Breast epithelium (tissue), 4 donors: ENCODE measurements at regions of chr7 and their contacts with region 1.

Region 1: DNA sequence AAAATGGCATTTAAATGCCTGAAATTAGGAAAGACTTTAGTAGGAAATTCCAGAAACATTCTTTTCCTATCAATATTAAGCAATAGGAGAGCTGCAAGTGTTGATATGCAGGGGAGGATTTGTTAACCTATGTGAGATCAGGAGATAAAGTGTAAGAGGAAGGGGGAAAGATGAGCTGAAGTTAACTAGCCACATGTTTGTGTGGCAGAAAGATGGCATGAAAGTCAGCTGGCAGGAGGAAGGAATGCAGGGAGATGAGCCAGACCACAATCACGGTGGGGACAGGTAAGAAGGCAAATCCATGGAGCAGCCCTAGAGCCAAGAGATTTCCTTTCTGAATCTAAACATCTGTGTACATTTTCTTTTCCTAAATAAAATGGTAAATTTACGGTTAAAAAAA is 303.6 kb downstream of the MAGI2 start:
- DNase-seq: no peak
- H3K4me3 ChIP-seq: no peak overlapping the region
- H3K27ac ChIP-seq: no peak overlapping the region
- H3K4me1 ChIP-seq: no peaks in the 10 kb centered on the region
- H3K27me3 ChIP-seq: no peaks in the 10 kb centered on the region
- CTCF ChIP-seq: no peak
- POLR2A ChIP-seq: no peak

Region 2: GRCh38 chr7:79090543-79090942 is 59.3 kb before region 1 on chr7:
- intact Hi-C with region 1: no loop called
- DNase-seq: no peak
- H3K4me3 ChIP-seq: no peak overlapping the region
- H3K27ac ChIP-seq: no peak overlapping the region
- H3K4me1 ChIP-seq: no peaks in the 10 kb centered on the region
- H3K27me3 ChIP-seq: no peaks in the 10 kb centered on the region
- CTCF ChIP-seq: no peak
- POLR2A ChIP-seq: no peak

Region 3: DNA sequence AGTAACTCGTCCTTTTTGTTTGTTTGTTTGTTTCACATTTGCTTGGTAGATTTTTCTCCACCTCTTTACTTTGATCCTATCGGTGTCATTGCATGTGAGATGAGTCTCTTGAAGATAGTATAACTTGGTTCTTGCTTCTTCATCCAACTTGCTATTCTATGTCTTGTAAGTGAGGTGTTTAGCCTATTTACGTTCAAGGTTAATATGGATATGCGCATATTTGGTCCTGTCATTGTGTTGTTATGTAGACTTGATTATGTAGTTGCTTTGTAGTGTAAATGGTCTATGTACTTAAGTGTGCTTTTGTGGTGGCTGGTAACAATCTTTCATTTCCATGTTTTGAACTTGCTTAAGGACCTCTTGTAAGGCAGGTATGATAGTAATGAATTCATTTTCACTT is 496.4 kb after region 1 on chr7:
- intact Hi-C with region 1: no loop called
- DNase-seq: no peak
- H3K4me3 ChIP-seq: no peak overlapping the region
- H3K27ac ChIP-seq: no peak overlapping the region
- H3K4me1 ChIP-seq: no peaks in the 10 kb centered on the region
- H3K27me3 ChIP-seq: no peaks in the 10 kb centered on the region
- CTCF ChIP-seq: no peak
- POLR2A ChIP-seq: no peak

Region 4: DNA sequence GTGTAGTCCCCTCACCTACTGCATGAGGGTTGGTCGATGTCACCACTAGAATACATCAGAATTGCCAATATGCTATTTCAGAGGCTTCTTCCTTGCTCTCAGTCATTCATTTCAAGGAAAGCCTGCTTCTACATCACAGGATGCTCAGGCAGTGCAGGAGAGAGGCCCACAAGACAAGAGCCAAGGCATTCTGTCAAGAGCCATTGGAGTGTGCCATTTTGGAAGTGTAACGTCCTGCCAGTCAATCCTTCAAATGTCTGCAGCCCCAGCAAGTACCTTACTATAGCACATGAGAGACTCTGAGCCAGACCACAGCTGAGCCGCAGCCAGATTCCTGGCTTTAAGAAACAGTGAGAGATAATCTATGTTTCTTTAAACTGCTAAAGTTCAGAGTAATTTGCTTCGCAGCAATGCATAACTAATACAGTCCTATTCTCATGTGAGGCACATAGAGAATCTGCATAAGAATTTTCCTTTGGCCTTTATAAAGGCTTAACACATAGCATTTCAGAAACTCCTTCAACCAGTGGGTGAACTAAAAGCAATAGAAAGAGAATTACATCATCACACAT is 818.3 kb after region 1 on chr7:
- intact Hi-C with region 1: loop called (anchors 5 kb)
- DNase-seq: no peak
- H3K4me3 ChIP-seq: no peak overlapping the region
- H3K27ac ChIP-seq: no peak overlapping the region
- H3K4me1 ChIP-seq: no peaks in the 10 kb centered on the region
- H3K27me3 ChIP-seq: no peaks in the 10 kb centered on the region
- CTCF ChIP-seq: no peak
- POLR2A ChIP-seq: no peak